Ascending aorta (tissue), 2 donors: ENCODE measurements at regions of chr1 and their contacts with region 1.

Region 1: GRCh38 chr1:6489799-6490180 is 1.7 kb downstream of the PLEKHG5 start:
- DNase-seq: peak in 1 of 2 donors; percentile 79
- H3K4me3 ChIP-seq: peak overlapping the region; percentile 76 to 85
- H3K27ac ChIP-seq: no peak overlapping the region
- H3K4me1 ChIP-seq: peaks cover 5 to 25% of the 10 kb centered on the region in 2 donors
- H3K27me3 ChIP-seq: no peaks in the 10 kb centered on the region
- CTCF ChIP-seq: peak; percentile 65 to 96 (median 91)

Region 2: DNA sequence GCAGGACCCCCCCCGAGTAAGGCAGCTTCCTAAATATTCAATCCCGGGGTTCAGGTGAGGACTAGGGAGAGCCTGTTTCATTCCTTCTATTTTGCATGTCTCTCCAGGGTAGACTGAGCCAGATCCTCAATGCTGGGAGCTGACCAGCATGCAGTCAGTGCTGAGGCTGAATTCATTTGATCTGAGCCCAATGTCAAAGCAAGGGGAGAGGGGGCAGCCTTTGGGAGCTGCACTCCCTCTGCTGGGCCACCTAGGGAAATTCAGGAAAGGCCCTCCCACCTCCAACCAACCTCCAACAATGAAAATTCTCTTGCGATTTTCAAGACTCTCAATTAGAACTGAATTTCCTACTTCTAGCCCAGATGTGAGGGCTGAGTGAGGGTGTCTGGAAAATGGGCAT is 868.8 kb before region 1 on chr1:
- intact Hi-C with region 1: no loop called
- DNase-seq: no peak
- H3K4me3 ChIP-seq: no peak overlapping the region
- H3K27ac ChIP-seq: no peak overlapping the region
- H3K4me1 ChIP-seq: no peaks in the 10 kb centered on the region
- H3K27me3 ChIP-seq: no peaks in the 10 kb centered on the region
- CTCF ChIP-seq: no peak

Region 3: GRCh38 chr1:6259491-6260425 is 230.0 kb before region 1 on chr1:
- intact Hi-C with region 1: no loop called
- DNase-seq: peak; percentile 25 to 87
- H3K4me3 ChIP-seq: peak overlapping the region; percentile 64
- H3K27ac ChIP-seq: no peak overlapping the region
- H3K4me1 ChIP-seq: peaks cover 0 to 6% of the 10 kb centered on the region in 2 donors
- H3K27me3 ChIP-seq: peaks cover 7% of the 10 kb centered on the region
- CTCF ChIP-seq: no peak

Region 4: GRCh38 chr1:6423321-6423999 is 66.3 kb before region 1 on chr1:
- intact Hi-C with region 1: no loop called
- DNase-seq: no peak
- H3K4me3 ChIP-seq: no peak overlapping the region
- H3K27ac ChIP-seq: no peak overlapping the region
- H3K4me1 ChIP-seq: peaks cover 10 to 14% of the 10 kb centered on the region in 2 donors
- H3K27me3 ChIP-seq: peaks cover 37% of the 10 kb centered on the region
- CTCF ChIP-seq: peak; percentile 6 to 50 (median 27)

Region 5: GRCh38 chr1:6475381-6476133 is 14.2 kb before region 1 on chr1:
- intact Hi-C with region 1: no loop called
- DNase-seq: no peak
- H3K4me3 ChIP-seq: no peak overlapping the region
- H3K27ac ChIP-seq: no peak overlapping the region
- H3K4me1 ChIP-seq: no peaks in the 10 kb centered on the region
- H3K27me3 ChIP-seq: no peaks in the 10 kb centered on the region
- CTCF ChIP-seq: peak; percentile 63 to 94 (median 87)

Region 6: DNA sequence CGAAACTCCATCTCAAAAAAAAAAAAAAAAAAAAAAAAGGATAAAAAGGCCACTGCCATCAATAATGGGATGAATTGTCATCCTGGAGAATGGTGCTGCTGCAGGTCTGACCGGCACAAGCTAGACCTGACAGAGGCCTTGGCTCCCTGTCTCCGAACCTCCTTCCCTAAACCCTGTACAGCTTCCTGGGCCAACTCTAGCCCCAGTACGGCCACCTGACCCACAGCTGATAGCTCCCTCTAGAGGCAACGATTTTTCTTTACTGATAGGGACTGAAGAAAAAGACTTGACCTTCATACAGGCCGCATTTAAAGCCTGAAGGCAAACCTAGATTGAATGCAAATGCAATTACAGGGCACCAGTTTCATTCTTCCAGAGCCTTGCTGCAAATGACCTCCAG is 33.8 kb after region 1 on chr1:
- intact Hi-C with region 1: loop called (anchors 1 kb)
- DNase-seq: no peak
- H3K4me3 ChIP-seq: no peak overlapping the region
- H3K27ac ChIP-seq: no peak overlapping the region
- H3K4me1 ChIP-seq: peaks cover 5 to 10% of the 10 kb centered on the region in 2 donors
- H3K27me3 ChIP-seq: no peaks in the 10 kb centered on the region
- CTCF ChIP-seq: peak in 2 of 3 experiments; percentile 12 to 52

Region 7: GRCh38 chr1:6646499-6647148 is 156.8 kb after region 1 on chr1:
- intact Hi-C with region 1: loop called (anchors 1 kb)
- DNase-seq: no peak
- H3K4me3 ChIP-seq: no peak overlapping the region
- H3K27ac ChIP-seq: no peak overlapping the region
- H3K4me1 ChIP-seq: no peaks in the 10 kb centered on the region
- H3K27me3 ChIP-seq: no peaks in the 10 kb centered on the region
- CTCF ChIP-seq: peak; percentile 64 to 70 (median 68)